ENCODE measurements at regions of chr1 and their contacts with region 1.

Region 1: DNA sequence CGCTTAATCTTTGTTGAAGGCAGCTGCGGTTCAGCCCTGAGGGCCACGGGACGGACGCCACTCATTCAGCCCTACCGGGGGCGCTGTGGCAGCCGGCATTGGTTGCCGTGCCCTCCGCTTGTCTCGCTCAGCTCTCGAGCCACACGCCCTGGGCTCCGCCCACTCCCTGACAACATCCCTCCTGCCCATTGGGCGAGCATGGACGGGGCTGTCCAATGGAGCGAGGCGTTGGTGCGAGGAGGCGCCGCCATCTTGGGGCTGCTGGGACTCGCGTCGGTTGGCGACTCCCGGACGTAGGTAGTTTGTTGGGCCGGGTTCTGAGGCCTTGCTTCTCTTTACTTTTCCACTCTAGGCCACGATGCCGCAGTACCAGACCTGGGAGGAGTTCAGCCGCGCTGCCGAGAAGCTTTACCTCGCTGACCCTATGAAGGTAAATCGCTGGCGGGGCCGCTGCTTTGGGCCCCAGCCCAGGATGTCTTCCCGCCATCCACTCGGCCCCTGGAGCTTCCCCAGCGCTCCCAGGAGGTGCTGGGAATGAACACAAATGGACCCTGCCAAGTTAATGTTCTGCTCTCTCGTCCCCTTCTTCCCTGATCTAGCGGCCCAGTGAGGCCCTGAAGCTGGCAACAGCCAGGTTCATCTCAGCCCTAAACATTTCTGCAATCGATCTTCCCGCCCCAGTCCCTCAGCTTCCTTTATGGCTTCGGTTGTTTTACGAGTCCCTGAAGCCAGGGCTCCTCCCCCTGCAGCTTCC is at the start of gene SRP9:
- DNase-seq: peak; percentile 99
- H3K4me3 Mint-ChIP-seq: no peak within 1 kb of the TSS
- H3K27ac Mint-ChIP-seq: no peak within 1 kb of the TSS
- H3K4me1 Mint-ChIP-seq: peaks cover 32% of the 10 kb centered on the region
- H3K27me3 Mint-ChIP-seq: no peaks in the 10 kb centered on the region
- total RNA-seq, gene SRP9: 356 to 363 TPM

Region 2: GRCh38 chr1:225428068-225428880 is 349.5 kb before region 1 on chr1:
- CTCF ChIA-PET with region 1: no interaction called
- intact Hi-C with region 1: loop called (anchors 1 kb)
- DNase-seq: peak; percentile 94
- H3K4me3 Mint-ChIP-seq: peak overlapping the region; percentile 85
- H3K27ac Mint-ChIP-seq: peak overlapping the region; percentile 96
- H3K4me1 Mint-ChIP-seq: peaks cover 43% of the 10 kb centered on the region
- H3K27me3 Mint-ChIP-seq: no peaks in the 10 kb centered on the region

Region 3: GRCh38 chr1:225474986-225475820 is 302.6 kb before region 1 on chr1:
- CTCF ChIA-PET with region 1: interaction called, 25 read pairs
- intact Hi-C with region 1: loop called (anchors 1 kb)
- DNase-seq: peak; percentile 60
- H3K4me3 Mint-ChIP-seq: no peak overlapping the region
- H3K27ac Mint-ChIP-seq: no peak overlapping the region
- H3K4me1 Mint-ChIP-seq: peaks cover 37% of the 10 kb centered on the region
- H3K27me3 Mint-ChIP-seq: no peaks in the 10 kb centered on the region

Region 4: DNA sequence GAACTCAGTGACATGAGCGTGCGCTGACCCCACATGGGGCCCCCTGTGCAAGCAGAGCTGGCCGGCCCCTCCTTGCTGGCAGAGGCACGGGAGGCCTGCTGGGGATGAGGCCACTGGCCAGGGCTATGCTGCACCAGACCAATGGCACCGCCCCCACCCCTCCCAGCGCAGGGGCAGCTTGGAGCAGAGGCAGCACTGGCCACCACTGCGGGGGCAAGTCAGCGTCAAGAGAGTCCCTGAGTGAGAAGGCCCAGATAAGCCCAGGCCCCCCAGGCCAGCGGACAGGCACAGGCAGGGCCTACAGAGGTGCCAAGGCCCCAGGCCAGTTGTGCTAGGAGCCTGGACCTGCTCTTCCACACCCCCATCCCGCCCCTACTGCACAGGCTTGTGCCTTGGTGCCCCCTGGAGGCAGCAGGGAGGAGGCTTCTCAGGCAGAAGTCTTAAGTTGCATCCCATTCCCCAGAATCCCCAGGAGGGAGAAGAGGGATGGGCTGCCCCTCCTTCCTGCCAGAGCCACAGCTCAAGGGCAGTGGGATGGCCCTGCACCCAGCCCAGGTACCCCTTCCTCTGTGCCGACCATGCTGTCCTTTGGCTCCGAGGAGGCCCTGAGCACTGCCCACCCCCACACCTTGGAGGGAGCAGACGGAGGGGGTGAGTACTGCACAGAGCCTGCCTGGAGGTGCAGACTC is 68.0 kb after region 1 on chr1:
- CTCF ChIA-PET with region 1: interaction called, 3 read pairs
- intact Hi-C with region 1: loop called (anchors 2 kb)
- DNase-seq: peak; percentile 49
- H3K4me3 Mint-ChIP-seq: no peak overlapping the region
- H3K27ac Mint-ChIP-seq: no peak overlapping the region
- H3K4me1 Mint-ChIP-seq: peaks cover 36% of the 10 kb centered on the region
- H3K27me3 Mint-ChIP-seq: no peaks in the 10 kb centered on the region

Region 5: GRCh38 chr1:225896937-225897549 is 119.3 kb after region 1 on chr1:
- CTCF ChIA-PET with region 1: interaction called, 5 read pairs
- intact Hi-C with region 1: loop called (anchors 1 kb)
- DNase-seq: peak; percentile 87
- H3K4me3 Mint-ChIP-seq: peak overlapping the region; percentile 54
- H3K27ac Mint-ChIP-seq: peak overlapping the region; percentile 92
- H3K4me1 Mint-ChIP-seq: peaks cover 41% of the 10 kb centered on the region
- H3K27me3 Mint-ChIP-seq: no peaks in the 10 kb centered on the region

Region 6: GRCh38 chr1:225977937-225978748 is 200.4 kb after region 1 on chr1:
- CTCF ChIA-PET with region 1: interaction called, 6 read pairs
- intact Hi-C with region 1: loop called (anchors 2 kb)
- DNase-seq: no peak
- H3K4me3 Mint-ChIP-seq: no peak overlapping the region
- H3K27ac Mint-ChIP-seq: no peak overlapping the region
- H3K4me1 Mint-ChIP-seq: peaks cover 7% of the 10 kb centered on the region
- H3K27me3 Mint-ChIP-seq: no peaks in the 10 kb centered on the region

Region 7: GRCh38 chr1:226209307-226210059 is 431.7 kb after region 1 on chr1:
- CTCF ChIA-PET with region 1: no interaction called
- intact Hi-C with region 1: no loop called
- DNase-seq: no peak
- H3K4me3 Mint-ChIP-seq: no peak overlapping the region
- H3K27ac Mint-ChIP-seq: no peak overlapping the region
- H3K4me1 Mint-ChIP-seq: no peaks in the 10 kb centered on the region
- H3K27me3 Mint-ChIP-seq: no peaks in the 10 kb centered on the region